ENCODE measurements at regions of chr13 and their contacts with region 1.

Region 1: DNA sequence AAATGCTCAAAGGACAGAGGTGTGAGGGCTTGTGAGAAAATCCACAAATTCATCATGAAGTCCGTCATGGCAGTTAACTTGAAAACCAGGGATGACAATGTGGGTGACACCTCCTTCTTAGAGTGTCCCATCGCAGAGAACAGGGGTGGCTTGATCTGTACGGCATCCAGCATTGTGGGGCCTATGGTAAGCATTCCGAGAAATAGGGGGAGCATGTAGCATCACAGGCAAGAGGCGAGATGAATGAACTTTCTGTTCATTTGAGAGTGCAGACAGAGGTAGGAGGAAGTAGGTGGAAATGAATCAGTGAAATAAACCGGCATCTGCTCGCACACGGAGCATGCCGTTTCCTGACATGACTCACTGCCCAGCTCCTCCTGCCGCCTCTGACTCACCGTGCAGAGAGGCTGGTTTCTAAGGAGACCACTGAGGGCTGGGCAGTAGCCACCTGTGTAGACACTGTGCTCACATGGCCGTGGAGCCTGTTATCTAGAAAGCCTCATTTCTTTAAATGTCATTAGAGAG is 339.0 kb downstream of the RFC3 start:
- DNase-seq: peak; percentile 71 to 80
- H3K4me3 ChIP-seq: peak overlapping the region; percentile 17; the same call in 1 of the 2 replicates
- H3K4me3 Mint-ChIP-seq: peak overlapping the region; percentile 70
- H3K27ac Mint-ChIP-seq: peak overlapping the region; percentile 70
- H3K4me1 ChIP-seq: peaks cover 25% of the 10 kb centered on the region
- H3K4me1 Mint-ChIP-seq: peaks cover 28% of the 10 kb centered on the region
- H3K27me3 ChIP-seq: no peaks in the 10 kb centered on the region
- H3K27me3 Mint-ChIP-seq: no peaks in the 10 kb centered on the region
- CTCF ChIP-seq: no peak

Region 2: GRCh38 chr13:34107829-34108228 is 49.1 kb before region 1 on chr13:
- CTCF ChIA-PET with region 1: no interaction called
- POLR2A ChIA-PET with region 1: no interaction called
- intact Hi-C with region 1: loop called (anchors 5 kb)
- DNase-seq: peak in 1 of 2 experiments; percentile 3
- H3K4me3 ChIP-seq: no peak overlapping the region
- H3K4me3 Mint-ChIP-seq: no peak overlapping the region
- H3K27ac Mint-ChIP-seq: peak overlapping the region; percentile 19
- H3K4me1 ChIP-seq: 0 out of 2 replicates have a peak, but pooled peaks cover 4% of the 10 kb centered on the region
- H3K4me1 Mint-ChIP-seq: peaks cover 20% of the 10 kb centered on the region
- H3K27me3 ChIP-seq: no peaks in the 10 kb centered on the region
- H3K27me3 Mint-ChIP-seq: no peaks in the 10 kb centered on the region
- CTCF ChIP-seq: no peak

Region 3: GRCh38 chr13:34335014-34336007 is 178.4 kb after region 1 on chr13:
- CTCF ChIA-PET with region 1: no interaction called
- POLR2A ChIA-PET with region 1: no interaction called
- intact Hi-C with region 1: no loop called
- DNase-seq: no peak
- H3K4me3 ChIP-seq: no peak overlapping the region
- H3K4me3 Mint-ChIP-seq: no peak overlapping the region
- H3K27ac Mint-ChIP-seq: no peak overlapping the region
- H3K4me1 ChIP-seq: no peaks in the 10 kb centered on the region
- H3K4me1 Mint-ChIP-seq: peaks cover 7% of the 10 kb centered on the region
- H3K27me3 ChIP-seq: no peaks in the 10 kb centered on the region
- H3K27me3 Mint-ChIP-seq: no peaks in the 10 kb centered on the region
- CTCF ChIP-seq: no peak